Stomach (tissue), 19 donors: ENCODE measurements at regions of chr19 and their contacts with region 1.

Region 1: GRCh38 chr19:56170261-56170660 is 5.5 kb upstream of the GALP start:
- DNase-seq: no peak
- H3K4me3 ChIP-seq: no peak overlapping the region
- H3K27ac ChIP-seq: no peak overlapping the region
- H3K4me1 ChIP-seq: peaks cover 0 to 7% (median 3%) of the 10 kb centered on the region in 4 donors
- H3K27me3 ChIP-seq: peaks cover 3 to 24% (median 4%) of the 10 kb centered on the region in 3 donors
- CTCF ChIP-seq: no peak
- EP300 ChIP-seq: no peak
- POLR2A ChIP-seq: no peak

Region 2: DNA sequence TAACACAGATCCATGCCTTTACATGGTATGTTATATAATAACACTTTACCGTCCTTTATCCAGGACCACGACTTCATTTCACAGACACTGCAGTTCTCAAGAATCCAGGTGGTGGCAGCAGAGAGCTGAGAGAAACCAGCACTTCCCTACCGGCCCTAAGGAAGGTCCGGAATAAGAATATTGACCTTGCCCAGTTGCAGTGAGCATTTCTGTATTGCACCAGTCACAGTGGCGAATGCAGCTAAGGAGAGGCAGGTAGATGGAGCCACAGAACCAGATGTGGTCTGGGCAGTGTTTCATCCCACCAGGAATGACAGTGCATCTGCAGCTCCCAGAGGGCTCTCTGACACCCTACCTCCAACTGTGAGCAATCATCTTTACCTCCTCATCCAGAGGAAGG is 93.8 kb before region 1 on chr19:
- intact Hi-C with region 1: loop called (anchors 5 kb)
- DNase-seq: peak; percentile 72 to 82
- H3K4me3 ChIP-seq: no peak overlapping the region
- H3K27ac ChIP-seq: no peak overlapping the region
- H3K4me1 ChIP-seq: peaks cover 9 to 14% (median 9%) of the 10 kb centered on the region in 4 donors
- H3K27me3 ChIP-seq: peaks cover 0 to 9% (median 0%) of the 10 kb centered on the region in 3 donors
- CTCF ChIP-seq: peak in 5 of 7 experiments; percentile 70 to 84 (median 81)
- EP300 ChIP-seq: no peak
- POLR2A ChIP-seq: no peak

Region 3: GRCh38 chr19:56105090-56105701 is 65.1 kb before region 1 on chr19:
- intact Hi-C with region 1: loop called (anchors 2 kb)
- DNase-seq: peak; percentile 87 to 90
- H3K4me3 ChIP-seq: peak overlapping the region; percentile 3 to 49 (median 35)
- H3K27ac ChIP-seq: peak overlapping the region; percentile 70 to 87 (median 75)
- H3K4me1 ChIP-seq: peaks cover 56 to 75% (median 63%) of the 10 kb centered on the region in 4 donors
- H3K27me3 ChIP-seq: no peaks in the 10 kb centered on the region
- CTCF ChIP-seq: peak in 5 of 7 experiments; percentile 70 to 83 (median 76)
- EP300 ChIP-seq: no peak
- POLR2A ChIP-seq: no peak